PC-3 (cell line): ENCODE measurements at regions of chr1 and their contacts with region 1.

Region 1: GRCh38 chr1:53014791-53015507 is 47.1 kb upstream of the PODN start:
- DNase-seq: peak; percentile 92
- ATAC-seq: peak; percentile 97
- H3K4me3 ChIP-seq: peak overlapping the region; percentile 84
- H3K27ac ChIP-seq: peak overlapping the region; percentile 29
- H3K4me1 ChIP-seq: peaks cover 14% of the 10 kb centered on the region
- H3K27me3 ChIP-seq: no peaks in the 10 kb centered on the region
- CTCF ChIP-seq: no peak

Region 2: GRCh38 chr1:53025034-53025768 is 10.3 kb after region 1 on chr1:
- CTCF ChIA-PET with region 1: no interaction called
- POLR2A ChIA-PET with region 1: no interaction called
- intact Hi-C with region 1: no loop called
- DNase-seq: no peak
- ATAC-seq: no peak
- H3K4me3 ChIP-seq: no peak overlapping the region
- H3K27ac ChIP-seq: no peak overlapping the region
- H3K4me1 ChIP-seq: no peaks in the 10 kb centered on the region
- H3K27me3 ChIP-seq: no peaks in the 10 kb centered on the region
- CTCF ChIP-seq: no peak

Region 3: DNA sequence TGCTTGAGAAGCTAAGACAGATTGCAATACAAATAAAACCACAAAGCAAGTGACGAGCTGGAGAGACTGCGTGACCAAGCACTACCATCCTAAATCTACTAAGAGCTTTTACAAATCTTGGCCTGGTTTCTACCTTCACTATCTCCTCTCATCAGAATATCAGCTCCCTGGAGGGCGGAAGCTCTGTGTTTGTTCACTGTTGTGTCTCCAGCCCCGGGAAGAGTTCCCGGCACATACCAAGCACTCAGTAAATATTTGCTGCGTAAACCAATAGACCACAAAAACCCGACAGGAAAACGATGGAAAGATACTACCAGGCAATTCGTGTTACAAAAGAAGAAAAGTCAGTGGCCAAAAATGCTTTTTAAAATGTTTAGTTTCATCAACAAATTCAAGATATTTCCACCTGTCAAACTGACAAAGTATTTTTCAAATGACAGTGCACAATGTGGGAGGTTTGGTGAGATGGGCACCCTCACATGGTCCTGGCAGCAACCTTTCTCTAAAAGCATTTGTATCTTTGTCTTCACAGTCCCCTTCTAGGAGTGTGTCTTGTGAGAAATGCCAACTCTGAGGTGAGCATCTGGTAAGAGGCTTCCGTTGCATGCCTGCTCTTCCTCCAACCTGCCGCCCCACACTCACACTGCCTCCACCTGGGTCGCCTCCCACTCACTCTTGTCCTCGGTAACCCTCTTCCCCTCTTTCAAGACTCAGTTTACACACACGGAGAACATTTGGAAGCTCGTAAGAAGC is 92.8 kb after region 1 on chr1:
- CTCF ChIA-PET with region 1: no interaction called
- POLR2A ChIA-PET with region 1: no interaction called
- intact Hi-C with region 1: loop called (anchors 5 kb)
- DNase-seq: peak; percentile 97
- ATAC-seq: peak; percentile 89
- H3K4me3 ChIP-seq: peak overlapping the region; percentile 41; the same call in 1 of the 2 replicates
- H3K27ac ChIP-seq: peak overlapping the region; percentile 96
- H3K4me1 ChIP-seq: peaks cover 59% of the 10 kb centered on the region
- H3K27me3 ChIP-seq: no peaks in the 10 kb centered on the region
- CTCF ChIP-seq: no peak

Region 4: DNA sequence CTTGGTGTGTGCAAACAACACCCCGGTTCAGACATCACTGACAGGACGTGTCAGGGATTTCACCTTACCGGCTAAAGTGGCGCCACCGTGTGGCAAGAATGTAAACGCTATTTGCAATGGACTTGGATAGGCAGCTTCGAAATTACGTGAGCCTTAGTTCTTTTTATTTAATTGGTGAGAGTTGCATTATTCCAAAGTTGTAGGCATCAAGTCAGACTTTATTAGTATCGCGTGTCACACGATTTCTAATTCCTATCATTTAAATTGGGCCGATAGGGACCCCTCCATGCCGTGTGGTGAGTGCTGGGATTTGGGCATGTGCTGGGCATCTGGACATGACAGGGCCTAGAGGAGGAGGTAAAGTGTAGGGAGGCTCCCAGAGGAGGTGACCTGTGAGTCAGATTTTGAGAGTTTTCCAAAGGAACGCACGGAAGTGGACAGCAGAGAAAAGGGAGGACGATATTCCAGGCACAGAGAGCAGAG is 167.2 kb after region 1 on chr1:
- CTCF ChIA-PET with region 1: interaction called, 8 read pairs
- POLR2A ChIA-PET with region 1: no interaction called
- intact Hi-C with region 1: loop called (anchors 10 kb)
- DNase-seq: peak; percentile 95
- ATAC-seq: peak; percentile 76
- H3K4me3 ChIP-seq: no peak overlapping the region
- H3K27ac ChIP-seq: no peak overlapping the region
- H3K4me1 ChIP-seq: peaks cover 27% of the 10 kb centered on the region
- H3K27me3 ChIP-seq: no peaks in the 10 kb centered on the region
- CTCF ChIP-seq: peak; percentile 95

Region 5: DNA sequence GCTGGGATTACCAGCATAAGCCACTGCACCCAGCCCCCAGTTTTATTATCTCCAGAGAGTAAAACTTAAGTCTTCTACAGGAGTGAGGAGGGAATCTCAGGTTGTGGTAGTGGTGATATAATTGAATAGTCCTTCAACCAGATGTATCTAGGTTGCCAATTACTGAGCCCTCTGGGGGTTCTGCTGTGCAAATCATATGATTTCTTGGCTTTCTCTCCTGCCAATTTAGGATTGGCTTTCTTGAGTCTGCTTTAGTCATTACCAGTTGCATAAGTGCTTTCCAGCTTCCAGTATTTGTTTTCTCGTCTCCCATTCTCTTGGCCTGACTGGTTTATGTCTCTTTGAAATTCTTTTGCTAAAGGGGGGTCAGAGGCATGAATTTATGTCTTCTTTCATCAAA is 192.8 kb after region 1 on chr1:
- CTCF ChIA-PET with region 1: no interaction called
- POLR2A ChIA-PET with region 1: no interaction called
- intact Hi-C with region 1: no loop called
- DNase-seq: no peak
- ATAC-seq: no peak
- H3K4me3 ChIP-seq: no peak overlapping the region
- H3K27ac ChIP-seq: no peak overlapping the region
- H3K4me1 ChIP-seq: no peaks in the 10 kb centered on the region
- H3K27me3 ChIP-seq: no peaks in the 10 kb centered on the region
- CTCF ChIP-seq: no peak